CD8-positive, alpha-beta T cell (primary cell): ENCODE measurements at regions of chr5 and their contacts with region 1.

Region 1: GRCh38 chr5:95961617-95962474 is at the start of gene ELL2:
- DNase-seq: peak; percentile 88 to 99 (median 96)
- ATAC-seq: peak; percentile 89
- H3K4me3 ChIP-seq: peak within 1 kb of the TSS; percentile 64 to 82
- H3K4me3 Mint-ChIP-seq: peak within 1 kb of the TSS; percentile 96
- H3K27ac ChIP-seq: peak within 1 kb of the TSS; percentile 73 to 87
- H3K27ac Mint-ChIP-seq: peak within 1 kb of the TSS; percentile 99
- H3K4me1 ChIP-seq: peaks cover 12% of the 10 kb centered on the region
- H3K4me1 Mint-ChIP-seq: peaks cover 36% of the 10 kb centered on the region
- H3K27me3 ChIP-seq: no peaks in the 10 kb centered on the region
- H3K27me3 Mint-ChIP-seq: no peaks in the 10 kb centered on the region
- CTCF ChIP-seq: no peak
- total RNA-seq, gene ELL2: 189 to 200 TPM

Region 2: GRCh38 chr5:95631991-95632675 is 329.7 kb before region 1 on chr5:
- CTCF ChIA-PET with region 1: no interaction called
- POLR2A ChIA-PET with region 1: interaction called, 4 read pairs
- intact Hi-C with region 1: loop called (anchors 5 kb)
- DNase-seq: peak; percentile 27 to 81 (median 64)
- ATAC-seq: peak; percentile 97
- H3K4me3 ChIP-seq: no peak overlapping the region
- H3K4me3 Mint-ChIP-seq: no peak overlapping the region
- H3K27ac ChIP-seq: peak overlapping the region; percentile 39 to 44
- H3K27ac Mint-ChIP-seq: peak overlapping the region; percentile 95
- H3K4me1 ChIP-seq: peaks cover 14% of the 10 kb centered on the region
- H3K4me1 Mint-ChIP-seq: peaks cover 15% of the 10 kb centered on the region
- H3K27me3 ChIP-seq: peaks cover 0 to 3% of the 10 kb centered on the region in 2 experiments
- H3K27me3 Mint-ChIP-seq: no peaks in the 10 kb centered on the region
- CTCF ChIP-seq: no peak

Region 3: DNA sequence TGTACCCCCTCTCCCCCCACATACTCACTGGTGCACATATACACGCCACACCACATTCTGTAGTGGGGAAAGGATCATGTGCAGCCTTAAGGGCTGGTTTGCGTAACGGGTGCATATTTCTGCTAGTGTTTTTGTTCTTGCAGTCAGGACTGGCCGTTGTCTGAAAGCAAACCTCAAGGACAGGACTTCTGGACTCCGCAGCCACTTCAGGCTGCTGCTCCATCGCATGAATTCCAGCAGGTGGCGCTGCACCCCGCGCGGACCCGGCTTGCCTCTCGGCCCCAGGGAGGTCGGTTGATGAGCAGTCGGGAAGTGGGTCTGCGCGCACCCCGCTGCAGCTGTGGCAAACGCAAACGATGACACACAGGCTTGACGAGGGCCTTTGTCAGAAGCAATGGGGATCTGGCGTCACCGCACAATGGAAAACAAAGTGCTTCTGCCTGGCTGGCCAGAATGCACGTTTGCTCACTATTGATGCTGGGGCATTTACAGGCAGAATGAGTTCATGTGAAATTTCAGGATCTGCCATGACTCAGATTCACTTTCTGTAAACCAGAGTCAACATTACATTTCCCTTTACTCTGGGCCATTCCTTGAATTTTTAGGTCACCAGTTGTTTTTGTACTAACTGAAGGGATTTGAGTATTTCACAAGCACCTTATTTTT is 103.1 kb before region 1 on chr5:
- CTCF ChIA-PET with region 1: no interaction called
- POLR2A ChIA-PET with region 1: interaction called, 4 read pairs
- intact Hi-C with region 1: loop called in 1 of 2 experiments (anchors 2 kb)
- DNase-seq: peak; percentile 76 to 95 (median 92)
- ATAC-seq: peak; percentile 98
- H3K4me3 ChIP-seq: no peak overlapping the region
- H3K4me3 Mint-ChIP-seq: peak overlapping the region; percentile 47
- H3K27ac ChIP-seq: no peak overlapping the region
- H3K27ac Mint-ChIP-seq: peak overlapping the region; percentile 34
- H3K4me1 ChIP-seq: peaks cover 9% of the 10 kb centered on the region
- H3K4me1 Mint-ChIP-seq: peaks cover 25% of the 10 kb centered on the region
- H3K27me3 ChIP-seq: no peaks in the 10 kb centered on the region
- H3K27me3 Mint-ChIP-seq: peaks cover 10% of the 10 kb centered on the region
- CTCF ChIP-seq: peak; percentile 93

Region 4: DNA sequence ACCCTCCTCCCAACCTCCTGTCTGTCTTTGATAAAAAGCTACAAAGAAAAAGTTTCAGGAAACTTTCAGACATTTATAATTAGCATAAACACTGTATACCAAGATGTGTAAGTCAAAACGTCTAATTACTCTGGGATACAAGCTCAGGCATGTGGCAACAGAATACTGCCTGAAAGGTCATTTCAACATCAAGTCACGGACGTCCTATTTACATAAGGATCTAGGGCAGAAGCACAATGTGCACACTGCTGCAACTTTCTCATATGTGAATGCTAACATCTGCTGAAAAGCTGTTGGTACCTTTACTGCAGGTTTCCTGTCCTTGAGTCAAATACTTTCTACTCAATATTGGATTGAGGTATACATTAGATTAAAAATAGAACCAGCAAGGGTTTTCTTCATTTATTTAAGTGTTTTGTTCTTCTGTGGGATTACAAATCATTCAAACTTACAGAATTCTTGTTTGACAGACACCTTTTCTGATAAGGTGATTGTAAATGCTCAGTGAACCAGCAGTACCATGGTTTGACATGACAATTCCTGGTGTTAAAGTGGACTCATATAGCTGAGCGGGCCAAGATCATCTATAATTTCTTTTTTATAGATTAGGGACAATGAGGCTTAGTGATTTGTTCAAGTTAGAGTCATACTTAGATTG is 37.0 kb before region 1 on chr5:
- CTCF ChIA-PET with region 1: no interaction called
- POLR2A ChIA-PET with region 1: no interaction called
- intact Hi-C with region 1: loop called in 1 of 2 experiments (anchors 5 kb)
- DNase-seq: no peak
- ATAC-seq: no peak
- H3K4me3 ChIP-seq: no peak overlapping the region
- H3K4me3 Mint-ChIP-seq: no peak overlapping the region
- H3K27ac ChIP-seq: no peak overlapping the region
- H3K27ac Mint-ChIP-seq: no peak overlapping the region
- H3K4me1 ChIP-seq: no peaks in the 10 kb centered on the region
- H3K4me1 Mint-ChIP-seq: peaks cover 4% of the 10 kb centered on the region
- H3K27me3 ChIP-seq: no peaks in the 10 kb centered on the region
- H3K27me3 Mint-ChIP-seq: no peaks in the 10 kb centered on the region
- CTCF ChIP-seq: no peak

Region 5: GRCh38 chr5:96536991-96537785 is 575.3 kb after region 1 on chr5:
- CTCF ChIA-PET with region 1: no interaction called
- POLR2A ChIA-PET with region 1: no interaction called
- intact Hi-C with region 1: loop called in 1 of 2 experiments (anchors 1 kb)
- DNase-seq: peak in 2 of 9 experiments; percentile 73 to 83
- ATAC-seq: peak; percentile 87
- H3K4me3 ChIP-seq: peak overlapping the region in 1 of 2 experiments; percentile 6
- H3K4me3 Mint-ChIP-seq: peak overlapping the region; percentile 46
- H3K27ac ChIP-seq: peak overlapping the region; percentile 10 to 55
- H3K27ac Mint-ChIP-seq: peak overlapping the region; percentile 81
- H3K4me1 ChIP-seq: peaks cover 24% of the 10 kb centered on the region
- H3K4me1 Mint-ChIP-seq: peaks cover 27% of the 10 kb centered on the region
- H3K27me3 ChIP-seq: no peaks in the 10 kb centered on the region
- H3K27me3 Mint-ChIP-seq: no peaks in the 10 kb centered on the region
- CTCF ChIP-seq: no peak

Region 6: GRCh38 chr5:96662725-96663513 is 701.1 kb after region 1 on chr5:
- CTCF ChIA-PET with region 1: no interaction called
- POLR2A ChIA-PET with region 1: no interaction called
- intact Hi-C with region 1: loop called in 1 of 2 experiments (anchors 10 kb)
- DNase-seq: peak; percentile 71 to 89 (median 83)
- ATAC-seq: peak; percentile 68
- H3K4me3 ChIP-seq: peak overlapping the region; percentile 54 to 86
- H3K4me3 Mint-ChIP-seq: peak overlapping the region; percentile 94
- H3K27ac ChIP-seq: peak overlapping the region; percentile 72 to 81
- H3K27ac Mint-ChIP-seq: peak overlapping the region; percentile 98
- H3K4me1 ChIP-seq: peaks cover 23% of the 10 kb centered on the region
- H3K4me1 Mint-ChIP-seq: peaks cover 51% of the 10 kb centered on the region
- H3K27me3 ChIP-seq: no peaks in the 10 kb centered on the region
- H3K27me3 Mint-ChIP-seq: no peaks in the 10 kb centered on the region
- CTCF ChIP-seq: no peak